Psoas muscle (tissue), 8 donors: ENCODE measurements at regions of chr9 and their contacts with region 1.

Region 1: GRCh38 chr9:86486891-86487837 is 133.0 kb upstream of the TUT7 start:
- DNase-seq: no peak
- ATAC-seq: peak in 3 of 4 donors; percentile 40 to 78 (median 51)
- H3K4me3 ChIP-seq: no peak overlapping the region
- H3K27ac ChIP-seq: no peak overlapping the region
- H3K4me1 ChIP-seq: no peaks in the 10 kb centered on the region
- H3K27me3 ChIP-seq: no peaks in the 10 kb centered on the region
- CTCF ChIP-seq: peak; percentile 68

Region 2: GRCh38 chr9:86534572-86535258 is 47.6 kb after region 1 on chr9:
- intact Hi-C with region 1: no loop called
- DNase-seq: no peak
- ATAC-seq: peak in 1 of 4 donors; percentile 61
- H3K4me3 ChIP-seq: no peak overlapping the region
- H3K27ac ChIP-seq: no peak overlapping the region
- H3K4me1 ChIP-seq: no peaks in the 10 kb centered on the region
- H3K27me3 ChIP-seq: no peaks in the 10 kb centered on the region
- CTCF ChIP-seq: no peak

Region 3: GRCh38 chr9:86948074-86948929 is 461.1 kb after region 1 on chr9:
- intact Hi-C with region 1: loop called in 1 of 2 experiments (anchors 5 kb)
- DNase-seq: peak; percentile 83 to 88
- ATAC-seq: peak; percentile 73 to 85 (median 76)
- H3K4me3 ChIP-seq: peak overlapping the region; percentile 86
- H3K27ac ChIP-seq: peak overlapping the region; percentile 83
- H3K4me1 ChIP-seq: peaks cover 6% of the 10 kb centered on the region
- H3K27me3 ChIP-seq: peaks cover 0 to 12% (median 0%) of the 10 kb centered on the region in 3 donors
- CTCF ChIP-seq: peak; percentile 91